GM12878 (cell line): ENCODE measurements at regions of chr13 and their contacts with region 1.

Region 1: GRCh38 chr13:99436686-99437416 is 64.4 kb upstream of the TM9SF2 start:
- DNase-seq: no peak
- ATAC-seq: peak; percentile 51
- H3K4me3 ChIP-seq: no peak overlapping the region
- H3K27ac ChIP-seq: peak overlapping the region; percentile 65
- H3K4me1 ChIP-seq: peaks cover 50% of the 10 kb centered on the region
- H3K27me3 ChIP-seq: peaks cover 2 to 4% of the 10 kb centered on the region in 2 experiments; a peak in 2 of 4 replicates
- CTCF ChIP-seq: peak; percentile 100; a peak in 5 of 6 replicates
- EP300 ChIP-seq: peak; percentile 35 to 51; a peak in 2 of 4 replicates
- POLR2A ChIP-seq: no peak
- RAD21 ChIP-seq: peak; percentile 97

Region 2: GRCh38 chr13:99200432-99201167 is 236.3 kb before region 1 on chr13 and contains the start of gene UBAC2:
- CTCF ChIA-PET with region 1: interaction called, 8 read pairs
- POLR2A ChIA-PET with region 1: interaction called, 3 read pairs
- RAD21 ChIA-PET with region 1: no interaction called
- SMC1A ChIA-PET with region 1: no interaction called
- in situ Hi-C with region 1: no loop called
- intact Hi-C with region 1: loop called (anchors 5 kb)
- DNase-seq: peak; percentile 89
- ATAC-seq: peak; percentile 86
- H3K4me3 ChIP-seq: peak within 1 kb of the TSS; percentile 94
- H3K27ac ChIP-seq: peak within 1 kb of the TSS; percentile 84
- H3K4me1 ChIP-seq: peaks cover 29% of the 10 kb centered on the region
- H3K27me3 ChIP-seq: no peaks in the 10 kb centered on the region
- CTCF ChIP-seq: 0 out of 6 replicates have a peak, but pooled peaks of 1 of the 3 experiments have one; percentile 2
- EP300 ChIP-seq: 0 out of 4 replicates have a peak, but pooled peaks of 1 of the 2 experiments have one; percentile 7
- POLR2A ChIP-seq: peak; percentile 100
- RAD21 ChIP-seq: no peak
- polyA plus RNA-seq, gene UBAC2: 3.0 to 4.1 TPM

Region 3: DNA sequence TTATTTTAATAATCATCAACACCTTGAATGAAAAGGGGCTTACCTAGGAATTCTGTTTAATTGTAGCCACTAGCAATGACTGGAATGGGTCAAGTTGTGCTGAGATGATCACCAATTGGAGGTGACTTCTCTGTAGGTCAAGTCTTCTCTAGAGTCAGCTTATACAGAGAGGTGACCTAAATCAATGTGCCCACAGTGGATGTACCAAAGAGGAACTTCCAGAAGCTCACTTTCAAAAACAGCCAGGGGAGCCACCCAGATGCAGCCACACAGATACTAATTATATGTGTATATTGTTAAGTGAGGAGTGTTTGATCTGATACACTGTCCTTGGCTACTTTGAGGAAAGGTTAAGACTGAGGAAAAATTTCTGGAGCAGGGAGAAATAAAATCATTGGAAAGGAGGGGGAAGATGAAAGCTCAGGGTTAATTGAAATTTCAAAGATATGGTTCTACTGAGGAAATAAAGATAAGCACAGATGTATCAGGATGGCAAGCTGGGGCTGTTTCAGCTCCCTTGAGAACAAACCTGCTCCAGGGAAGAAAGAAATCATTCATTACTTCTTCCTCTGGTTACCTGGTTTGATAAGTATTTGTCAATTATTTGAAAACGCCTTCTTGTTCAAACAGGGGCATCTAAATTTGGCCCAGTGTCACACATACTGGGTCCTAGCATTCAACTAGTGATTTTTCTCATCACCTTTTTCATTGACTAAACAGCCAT is 134.8 kb before region 1 on chr13:
- CTCF ChIA-PET with region 1: interaction called, 15 read pairs
- POLR2A ChIA-PET with region 1: interaction called, 8 read pairs
- RAD21 ChIA-PET with region 1: interaction called, 26 read pairs
- SMC1A ChIA-PET with region 1: interaction called, 29 read pairs
- in situ Hi-C with region 1: no loop called
- intact Hi-C with region 1: loop called (anchors 2 kb)
- DNase-seq: no peak
- ATAC-seq: peak; percentile 39
- H3K4me3 ChIP-seq: peak overlapping the region; percentile 98
- H3K27ac ChIP-seq: peak overlapping the region; percentile 93
- H3K4me1 ChIP-seq: peaks cover 18% of the 10 kb centered on the region
- H3K27me3 ChIP-seq: no peaks in the 10 kb centered on the region
- CTCF ChIP-seq: no peak
- EP300 ChIP-seq: no peak
- POLR2A ChIP-seq: no peak
- RAD21 ChIP-seq: no peak

Region 4: GRCh38 chr13:99356158-99357091 is 80.4 kb before region 1 on chr13:
- CTCF ChIA-PET with region 1: interaction called, 18 read pairs
- POLR2A ChIA-PET with region 1: no interaction called
- RAD21 ChIA-PET with region 1: interaction called, 4 read pairs
- SMC1A ChIA-PET with region 1: interaction called, 5 read pairs
- in situ Hi-C with region 1: no loop called
- intact Hi-C with region 1: loop called (anchors 2 kb)
- DNase-seq: peak; percentile 92
- ATAC-seq: peak; percentile 81
- H3K4me3 ChIP-seq: peak overlapping the region; percentile 41; the same call in 1 of the 2 replicates
- H3K27ac ChIP-seq: peak overlapping the region; percentile 81
- H3K4me1 ChIP-seq: peaks cover 65% of the 10 kb centered on the region
- H3K27me3 ChIP-seq: no peaks in the 10 kb centered on the region
- CTCF ChIP-seq: no peak
- EP300 ChIP-seq: peak; percentile 43 to 83; a peak in 3 of 4 replicates
- POLR2A ChIP-seq: no peak
- RAD21 ChIP-seq: no peak

Region 5: GRCh38 chr13:99380921-99381645 is 55.8 kb before region 1 on chr13:
- CTCF ChIA-PET with region 1: interaction called, 577 read pairs
- POLR2A ChIA-PET with region 1: interaction called, 26 read pairs
- RAD21 ChIA-PET with region 1: interaction called, 168 read pairs
- SMC1A ChIA-PET with region 1: interaction called, 265 read pairs
- in situ Hi-C with region 1: loop called (anchors 5 kb)
- intact Hi-C with region 1: no loop called
- DNase-seq: peak; percentile 82
- ATAC-seq: peak; percentile 77
- H3K4me3 ChIP-seq: no peak overlapping the region
- H3K27ac ChIP-seq: peak overlapping the region; percentile 41
- H3K4me1 ChIP-seq: peaks cover 65% of the 10 kb centered on the region
- H3K27me3 ChIP-seq: no peaks in the 10 kb centered on the region
- CTCF ChIP-seq: no peak
- EP300 ChIP-seq: peak; percentile 58 to 59; a peak in 1 of 4 replicates
- POLR2A ChIP-seq: 0 out of 2 replicates have a peak, but pooled peaks have one; percentile 34
- RAD21 ChIP-seq: peak; percentile 31

Region 6: DNA sequence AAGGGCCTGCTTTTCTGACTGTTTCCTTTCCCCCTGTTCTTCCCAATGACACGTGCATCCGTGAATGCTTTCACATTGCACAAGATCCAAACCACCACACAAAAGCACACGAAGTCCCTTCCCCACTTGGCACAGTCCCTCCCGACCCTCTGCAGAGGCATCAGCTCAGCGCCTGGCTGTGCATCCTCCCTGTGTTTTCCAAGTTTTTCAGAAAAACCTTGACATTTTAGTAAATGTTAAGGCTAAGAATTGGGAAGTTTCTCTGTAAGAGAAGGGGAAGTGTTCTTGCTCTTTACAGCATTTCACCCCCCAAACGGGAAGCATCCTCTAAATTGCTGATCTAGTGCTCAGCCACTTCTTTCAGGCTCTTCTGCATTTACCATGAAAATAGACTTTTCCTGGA is 30.1 kb before region 1 on chr13:
- CTCF ChIA-PET with region 1: interaction called, 36 read pairs
- POLR2A ChIA-PET with region 1: no interaction called
- RAD21 ChIA-PET with region 1: interaction called, 3 read pairs
- SMC1A ChIA-PET with region 1: interaction called, 13 read pairs
- in situ Hi-C with region 1: no loop called
- intact Hi-C with region 1: no loop called
- DNase-seq: no peak
- ATAC-seq: no peak
- H3K4me3 ChIP-seq: no peak overlapping the region
- H3K27ac ChIP-seq: no peak overlapping the region
- H3K4me1 ChIP-seq: peaks cover 21% of the 10 kb centered on the region
- H3K27me3 ChIP-seq: no peaks in the 10 kb centered on the region
- CTCF ChIP-seq: no peak
- EP300 ChIP-seq: no peak
- POLR2A ChIP-seq: no peak
- RAD21 ChIP-seq: no peak

Region 7: GRCh38 chr13:99501184-99501847 is 64.5 kb after region 1 on chr13 and contains the start of gene TM9SF2:
- CTCF ChIA-PET with region 1: interaction called, 97 read pairs
- POLR2A ChIA-PET with region 1: interaction called, 3 read pairs
- RAD21 ChIA-PET with region 1: interaction called, 30 read pairs
- SMC1A ChIA-PET with region 1: interaction called, 32 read pairs
- in situ Hi-C with region 1: no loop called
- intact Hi-C with region 1: loop called (anchors 2 kb)
- DNase-seq: peak; percentile 90
- ATAC-seq: peak; percentile 72
- H3K4me3 ChIP-seq: peak within 1 kb of the TSS; percentile 93
- H3K27ac ChIP-seq: peak within 1 kb of the TSS; percentile 91
- H3K4me1 ChIP-seq: peaks cover 12% of the 10 kb centered on the region
- H3K27me3 ChIP-seq: no peaks in the 10 kb centered on the region
- CTCF ChIP-seq: no peak
- EP300 ChIP-seq: no peak
- POLR2A ChIP-seq: peak; percentile 77
- RAD21 ChIP-seq: no peak
- polyA plus RNA-seq, gene TM9SF2: 34.6 to 42.5 TPM

Region 8: GRCh38 chr13:100588331-100589177 is 1151.7 kb after region 1 on chr13 and contains the start of gene GGACT:
- CTCF ChIA-PET with region 1: no interaction called
- POLR2A ChIA-PET with region 1: no interaction called
- RAD21 ChIA-PET with region 1: no interaction called
- SMC1A ChIA-PET with region 1: no interaction called
- in situ Hi-C with region 1: no loop called
- intact Hi-C with region 1: no loop called
- DNase-seq: peak; percentile 13
- ATAC-seq: peak; percentile 99
- H3K4me3 ChIP-seq: peak within 1 kb of the TSS; percentile 74; the same call in 1 of the 2 replicates
- H3K27ac ChIP-seq: peak within 1 kb of the TSS; percentile 30; the same call in 1 of the 2 replicates
- H3K4me1 ChIP-seq: peaks cover 6% of the 10 kb centered on the region; the same call in 1 of the 2 replicates
- H3K27me3 ChIP-seq: no peaks in the 10 kb centered on the region
- CTCF ChIP-seq: peak; percentile 69 to 76 (median 71); a peak in 5 of 6 replicates
- EP300 ChIP-seq: no peak
- POLR2A ChIP-seq: peak; percentile 81
- RAD21 ChIP-seq: 0 out of 2 replicates have a peak, but pooled peaks have one; percentile 13
- polyA plus RNA-seq, gene GGACT: 0.61 to 0.93 TPM